Activated CD4-positive, alpha-beta memory T cell treated with anti-CD3 and anti-CD28 coated beads for 36 hours (primary cell): ENCODE measurements at regions of chrX and their contacts with region 1.

Region 1: GRCh38 chrX:130079824-130080406 is 30.4 kb downstream of the ELF4 start:
- DNase-seq: peak; percentile 67
- H3K4me3 Mint-ChIP-seq: no peak overlapping the region
- H3K27ac Mint-ChIP-seq: peak overlapping the region; percentile 50
- H3K4me1 Mint-ChIP-seq: peaks cover 42% of the 10 kb centered on the region
- H3K27me3 Mint-ChIP-seq: no peaks in the 10 kb centered on the region

Region 2: DNA sequence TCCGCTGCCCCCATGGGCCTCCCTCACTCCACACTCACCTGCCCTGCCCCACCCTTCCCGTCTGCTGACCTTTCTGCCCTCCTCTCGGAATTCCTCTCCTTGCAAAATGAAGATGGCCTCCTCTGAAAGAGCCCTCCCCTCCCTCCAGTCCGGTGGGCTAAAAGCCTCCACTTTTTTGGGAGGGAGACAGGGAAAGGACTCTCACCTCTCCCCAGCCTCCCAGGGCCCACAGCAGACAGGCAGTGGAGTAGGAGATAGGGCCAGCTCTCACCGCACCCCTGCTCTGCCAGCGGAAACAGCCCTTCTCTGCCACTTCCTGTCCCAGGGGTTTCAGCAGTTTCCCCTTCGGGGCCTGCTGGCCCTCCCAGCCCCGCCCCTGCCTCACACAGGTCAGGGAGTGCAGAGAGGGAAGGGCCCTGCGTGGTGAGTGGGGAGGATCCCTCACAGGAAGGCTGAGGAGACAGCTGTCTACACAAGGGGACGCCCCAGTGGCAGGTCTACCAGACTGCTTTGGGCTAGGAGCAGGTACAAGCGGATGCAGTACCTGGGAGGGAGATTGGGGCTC is 12.1 kb after region 1 on chrX:
- CTCF ChIA-PET with region 1: interaction called, 7 read pairs
- POLR2A ChIA-PET with region 1: interaction called, 6 read pairs
- intact Hi-C with region 1: loop called (anchors 1 kb)
- DNase-seq: peak; percentile 94
- H3K4me3 Mint-ChIP-seq: peak overlapping the region; percentile 84
- H3K27ac Mint-ChIP-seq: peak overlapping the region; percentile 98
- H3K4me1 Mint-ChIP-seq: peaks cover 51% of the 10 kb centered on the region
- H3K27me3 Mint-ChIP-seq: no peaks in the 10 kb centered on the region

Region 3: DNA sequence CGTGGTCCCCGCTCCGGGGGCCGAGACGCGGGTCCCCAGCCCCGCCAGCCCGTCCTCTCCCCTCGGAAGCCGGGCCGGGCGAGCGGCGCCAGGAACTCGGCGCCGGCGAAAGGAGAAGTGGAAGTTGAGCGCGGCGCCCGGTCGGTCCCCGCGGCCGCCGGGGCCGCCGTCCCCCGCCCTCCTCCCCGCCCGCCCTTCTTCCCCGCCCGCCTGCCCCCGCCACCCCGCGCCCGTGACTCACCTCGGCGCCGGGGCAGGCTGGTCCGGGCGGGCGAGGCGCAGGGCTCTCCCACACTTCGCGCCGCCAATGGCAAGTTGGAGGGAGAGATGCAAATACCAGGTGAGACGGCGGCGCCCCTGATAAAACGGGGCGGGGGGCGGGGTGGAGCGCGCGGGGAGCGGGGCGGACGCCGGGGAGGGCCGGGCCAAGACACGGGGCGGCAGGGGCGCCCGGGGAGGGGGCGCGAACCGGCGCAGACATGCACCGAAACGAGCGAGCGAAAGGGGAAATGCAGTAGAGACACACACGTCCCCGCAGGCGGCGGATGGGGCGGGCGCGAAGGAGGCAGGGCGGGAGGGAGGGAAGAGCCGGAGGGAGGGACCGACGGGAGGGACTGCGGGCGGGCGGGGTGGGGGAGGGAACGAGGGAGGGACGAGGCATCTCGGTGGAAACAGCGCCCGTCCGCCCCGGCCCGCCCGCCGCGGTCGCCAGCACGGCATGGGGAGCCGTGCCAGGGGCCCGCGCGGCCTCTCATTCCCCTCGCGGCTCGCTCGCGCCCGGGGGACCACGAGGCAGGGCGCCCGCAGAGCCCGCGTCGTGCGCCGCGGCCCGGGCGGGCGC is 30.7 kb after region 1 on chrX and contains the start of gene ELF4:
- CTCF ChIA-PET with region 1: interaction called, 125 read pairs
- POLR2A ChIA-PET with region 1: no interaction called
- intact Hi-C with region 1: loop called (anchors 1 kb)
- DNase-seq: peak; percentile 70
- H3K4me3 Mint-ChIP-seq: peak within 1 kb of the TSS; percentile 92
- H3K27ac Mint-ChIP-seq: peak within 1 kb of the TSS; percentile 92
- H3K4me1 Mint-ChIP-seq: peaks cover 44% of the 10 kb centered on the region
- H3K27me3 Mint-ChIP-seq: no peaks in the 10 kb centered on the region
- total RNA-seq, gene ELF4: 28.0 to 28.2 TPM

Region 4: DNA sequence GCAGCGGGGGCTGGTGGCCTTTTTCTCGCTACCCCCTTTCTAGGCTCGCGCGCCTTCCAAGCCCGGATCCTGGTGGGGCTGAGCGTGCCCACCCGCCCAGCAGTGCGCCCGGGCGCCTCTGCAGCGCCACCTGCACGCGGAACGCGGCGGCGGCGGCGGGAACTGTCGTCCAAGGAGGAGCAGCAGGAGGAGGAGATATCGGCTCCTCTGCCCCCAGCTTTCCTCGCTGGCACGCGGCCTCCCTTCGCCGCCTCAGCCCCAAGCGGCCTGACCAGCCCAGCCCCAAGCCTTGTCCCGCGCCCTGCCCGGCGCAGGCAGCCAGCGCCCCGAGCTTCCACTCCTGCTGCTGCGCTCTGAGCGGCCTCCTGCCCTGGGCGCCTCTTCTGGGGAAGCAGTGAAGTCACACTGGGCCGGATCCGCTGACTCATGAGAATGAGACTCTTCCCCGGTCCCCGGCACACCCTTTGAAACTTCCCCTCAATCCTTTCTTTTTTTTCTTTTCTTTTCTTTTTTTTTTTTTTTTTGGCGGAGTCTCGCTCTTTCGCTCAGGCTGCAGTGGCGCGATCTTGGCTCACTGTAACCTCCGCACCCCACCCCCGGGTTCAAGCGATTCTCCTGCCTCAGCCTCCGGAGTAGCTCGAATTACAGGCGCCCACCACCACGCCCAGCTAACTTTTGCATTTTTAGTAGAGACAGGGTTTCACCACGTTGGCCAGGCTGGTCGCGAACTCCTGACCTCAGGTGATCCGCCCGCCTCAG is 41.0 kb after region 1 on chrX:
- CTCF ChIA-PET with region 1: interaction called, 125 read pairs
- POLR2A ChIA-PET with region 1: interaction called, 17 read pairs
- intact Hi-C with region 1: loop called (anchors 1 kb)
- DNase-seq: peak; percentile 76
- H3K4me3 Mint-ChIP-seq: peak overlapping the region; percentile 64
- H3K27ac Mint-ChIP-seq: peak overlapping the region; percentile 74
- H3K4me1 Mint-ChIP-seq: peaks cover 24% of the 10 kb centered on the region
- H3K27me3 Mint-ChIP-seq: no peaks in the 10 kb centered on the region

Region 5: DNA sequence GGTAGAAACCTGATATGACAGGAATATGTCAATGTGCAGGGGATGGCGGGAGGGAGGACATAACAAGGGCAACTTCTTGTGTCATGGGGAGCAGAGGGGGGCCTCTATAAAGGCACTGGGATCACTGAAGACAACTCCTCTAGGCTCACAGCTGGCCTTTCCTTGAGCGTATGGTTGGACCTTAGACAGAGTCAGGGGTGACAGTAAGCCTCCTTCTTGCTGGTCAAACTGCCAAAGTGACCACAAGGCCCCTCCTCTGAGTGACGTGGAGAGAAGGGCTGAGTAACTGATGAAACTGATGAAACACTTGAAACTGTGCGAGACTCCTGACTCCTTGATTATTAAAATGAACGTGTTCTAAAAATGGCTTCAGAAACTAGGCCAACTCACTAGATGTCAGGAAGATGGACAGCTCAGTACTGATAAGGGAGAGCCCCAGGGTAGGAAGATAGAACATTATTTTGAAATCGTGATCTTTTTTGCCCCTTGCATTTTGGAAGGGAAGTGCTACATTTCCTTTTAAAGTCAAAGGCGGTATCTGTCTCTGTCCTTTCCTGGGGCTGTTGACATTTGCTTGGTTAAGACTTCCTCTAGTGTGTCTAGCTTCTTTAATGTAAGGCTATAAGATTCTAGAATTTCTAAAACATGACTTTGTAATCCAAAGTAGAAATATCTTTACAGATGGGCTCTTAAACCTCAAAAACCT is 93.4 kb after region 1 on chrX:
- CTCF ChIA-PET with region 1: interaction called, 9 read pairs
- POLR2A ChIA-PET with region 1: interaction called, 7 read pairs
- intact Hi-C with region 1: loop called (anchors 1 kb)
- DNase-seq: peak; percentile 76
- H3K4me3 Mint-ChIP-seq: peak overlapping the region; percentile 89
- H3K27ac Mint-ChIP-seq: peak overlapping the region; percentile 95
- H3K4me1 Mint-ChIP-seq: peaks cover 41% of the 10 kb centered on the region
- H3K27me3 Mint-ChIP-seq: no peaks in the 10 kb centered on the region

Region 6: GRCh38 chrX:130190801-130191200 is 110.9 kb after region 1 on chrX:
- CTCF ChIA-PET with region 1: interaction called, 72 read pairs
- POLR2A ChIA-PET with region 1: no interaction called
- intact Hi-C with region 1: loop called (anchors 1 kb)
- DNase-seq: no peak
- H3K4me3 Mint-ChIP-seq: no peak overlapping the region
- H3K27ac Mint-ChIP-seq: no peak overlapping the region
- H3K4me1 Mint-ChIP-seq: peaks cover 2% of the 10 kb centered on the region
- H3K27me3 Mint-ChIP-seq: no peaks in the 10 kb centered on the region

Region 7: DNA sequence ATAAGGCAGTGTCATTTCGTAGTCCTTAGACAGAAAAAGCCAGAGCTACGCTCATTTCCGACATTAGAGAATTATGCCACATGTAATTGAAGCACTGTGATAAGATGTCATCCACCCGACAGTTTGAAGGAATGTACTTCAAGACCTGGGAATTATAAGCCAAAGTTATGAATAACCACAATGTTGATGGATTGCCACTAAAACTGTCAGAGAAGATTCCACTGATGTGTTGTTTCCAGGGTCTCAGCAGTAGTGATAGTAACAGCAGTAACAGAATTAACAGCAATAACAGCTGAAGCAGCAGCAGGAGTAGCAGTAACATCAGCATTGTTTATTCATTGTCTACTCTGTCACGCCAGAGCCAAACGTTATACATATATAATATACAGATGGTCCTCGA is 116.6 kb after region 1 on chrX:
- CTCF ChIA-PET with region 1: interaction called, 72 read pairs
- POLR2A ChIA-PET with region 1: no interaction called
- intact Hi-C with region 1: loop called (anchors 1 kb)
- DNase-seq: no peak
- H3K4me3 Mint-ChIP-seq: no peak overlapping the region
- H3K27ac Mint-ChIP-seq: no peak overlapping the region
- H3K4me1 Mint-ChIP-seq: peaks cover 2% of the 10 kb centered on the region
- H3K27me3 Mint-ChIP-seq: no peaks in the 10 kb centered on the region